Activated CD4-positive, alpha-beta memory T cell treated with anti-CD3 and anti-CD28 coated beads, Interleukin-2, amount 10 ng/mL, durations not matched to agents 7 days and 5 days (primary cell): ENCODE measurements at regions of chr11 and their contacts with region 1.

Region 1: GRCh38 chr11:58579192-58580129 is 598 bp downstream of the ZFP91 start:
- DNase-seq: peak; percentile 92
- H3K4me3 Mint-ChIP-seq: peak overlapping the region; percentile 94
- H3K27ac Mint-ChIP-seq: peak overlapping the region; percentile 100
- H3K4me1 Mint-ChIP-seq: peaks cover 57% of the 10 kb centered on the region
- H3K27me3 Mint-ChIP-seq: no peaks in the 10 kb centered on the region

Region 2: DNA sequence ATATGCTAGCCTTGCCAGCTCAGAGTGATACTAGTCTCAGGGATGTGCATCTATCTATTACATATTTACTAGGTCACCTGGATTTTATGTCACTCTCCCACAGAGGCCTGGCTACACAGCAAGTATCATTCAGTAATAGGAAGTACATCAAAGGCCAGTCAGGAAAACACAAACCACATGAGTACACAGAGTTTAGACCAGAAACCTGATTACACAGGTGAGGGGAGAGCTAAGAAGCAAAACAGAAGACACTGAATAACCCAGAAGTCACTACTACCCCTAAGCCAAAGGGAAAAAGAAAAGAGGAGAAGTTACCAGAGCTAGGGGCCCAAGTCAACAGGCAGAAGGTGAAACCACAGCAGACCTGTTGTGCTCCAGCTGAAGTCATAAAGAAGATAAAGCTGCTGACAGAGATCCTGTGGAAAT is 17.1 kb before region 1 on chr11:
- CTCF ChIA-PET with region 1: interaction called, 76 read pairs
- POLR2A ChIA-PET with region 1: interaction called, 36 read pairs
- DNase-seq: no peak
- H3K4me3 Mint-ChIP-seq: no peak overlapping the region
- H3K27ac Mint-ChIP-seq: peak overlapping the region; percentile 58
- H3K4me1 Mint-ChIP-seq: peaks cover 42% of the 10 kb centered on the region
- H3K27me3 Mint-ChIP-seq: no peaks in the 10 kb centered on the region

Region 3: DNA sequence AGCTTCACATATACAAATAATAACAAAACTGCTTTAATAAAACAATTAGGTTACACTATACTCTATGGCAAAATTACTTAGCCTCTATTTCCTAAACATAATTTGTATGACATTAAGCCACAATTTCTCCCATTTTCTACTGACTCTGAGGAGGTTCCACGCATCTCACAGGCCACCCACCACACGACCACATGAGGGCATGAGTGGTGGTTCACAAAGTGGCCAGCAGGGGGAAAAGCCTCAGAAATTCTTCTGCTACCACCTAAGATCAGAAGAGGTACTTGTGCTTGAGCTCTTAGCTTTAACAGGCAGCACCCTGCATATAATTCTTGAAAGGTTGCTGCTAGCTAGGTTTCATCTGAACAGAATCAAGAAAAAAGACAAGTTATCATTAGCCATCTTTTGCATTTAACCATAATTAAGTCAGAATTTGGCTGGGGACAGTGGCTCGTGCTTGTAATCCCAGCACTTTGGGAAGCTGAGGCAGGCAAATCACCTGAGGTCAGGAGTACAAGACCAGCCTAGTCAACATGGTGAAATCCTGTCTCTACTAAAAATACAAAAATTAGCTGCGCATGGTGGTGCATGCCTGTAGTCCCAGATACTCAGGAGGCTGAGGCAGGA is 11.5 kb before region 1 on chr11:
- CTCF ChIA-PET with region 1: interaction called, 76 read pairs
- POLR2A ChIA-PET with region 1: interaction called, 36 read pairs
- DNase-seq: peak; percentile 77
- H3K4me3 Mint-ChIP-seq: no peak overlapping the region
- H3K27ac Mint-ChIP-seq: peak overlapping the region; percentile 61
- H3K4me1 Mint-ChIP-seq: peaks cover 63% of the 10 kb centered on the region
- H3K27me3 Mint-ChIP-seq: no peaks in the 10 kb centered on the region

Region 4: DNA sequence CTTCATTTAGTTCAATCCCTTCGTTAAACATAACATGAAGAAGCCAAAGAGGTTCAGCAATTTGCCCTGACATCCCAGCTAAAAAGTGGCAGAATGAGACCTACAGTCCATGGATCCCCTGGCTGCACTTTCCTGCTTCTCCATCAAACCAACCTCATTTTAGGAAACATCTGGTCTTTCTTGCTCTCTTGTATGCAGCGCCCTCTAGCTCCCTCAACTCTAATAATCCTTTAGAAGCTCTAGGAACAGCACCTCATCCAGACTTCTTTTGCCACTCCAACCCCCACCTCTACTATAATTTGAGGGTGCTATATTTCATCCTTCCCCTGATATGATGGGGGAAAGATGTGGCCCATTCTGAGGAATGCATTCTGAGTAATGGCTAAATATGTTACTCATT is 50.4 kb after region 1 on chr11:
- CTCF ChIA-PET with region 1: interaction called, 11 read pairs
- POLR2A ChIA-PET with region 1: interaction called, 4 read pairs
- DNase-seq: no peak
- H3K4me3 Mint-ChIP-seq: no peak overlapping the region
- H3K27ac Mint-ChIP-seq: no peak overlapping the region
- H3K4me1 Mint-ChIP-seq: peaks cover 5% of the 10 kb centered on the region
- H3K27me3 Mint-ChIP-seq: no peaks in the 10 kb centered on the region

Region 5: GRCh38 chr11:58640386-58641023 is 61.0 kb after region 1 on chr11:
- CTCF ChIA-PET with region 1: no interaction called
- POLR2A ChIA-PET with region 1: no interaction called
- DNase-seq: no peak
- H3K4me3 Mint-ChIP-seq: no peak overlapping the region
- H3K27ac Mint-ChIP-seq: no peak overlapping the region
- H3K4me1 Mint-ChIP-seq: peaks cover 9% of the 10 kb centered on the region
- H3K27me3 Mint-ChIP-seq: peaks cover 2% of the 10 kb centered on the region

Region 6: DNA sequence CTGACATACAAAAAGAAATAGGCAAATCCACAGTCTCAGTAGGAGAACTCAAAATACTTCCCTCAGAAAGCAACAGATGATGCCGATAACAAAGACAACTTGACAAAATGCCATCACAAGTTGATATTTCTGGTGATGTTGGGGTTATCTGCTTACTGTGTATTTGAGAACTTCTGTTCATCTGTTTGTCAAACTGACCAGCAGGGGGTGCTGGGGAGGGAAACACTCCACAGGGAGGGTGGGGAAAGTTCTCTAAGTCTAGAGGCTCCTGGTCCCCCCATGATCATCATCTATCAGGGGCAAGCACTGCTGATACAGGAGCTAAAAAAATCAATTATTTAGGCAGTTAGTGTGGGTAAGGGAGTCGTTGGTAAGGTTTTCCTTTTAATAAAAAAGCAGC is 379.0 kb after region 1 on chr11:
- CTCF ChIA-PET with region 1: no interaction called
- POLR2A ChIA-PET with region 1: no interaction called
- DNase-seq: peak; percentile 31
- H3K4me3 Mint-ChIP-seq: no peak overlapping the region
- H3K27ac Mint-ChIP-seq: no peak overlapping the region
- H3K4me1 Mint-ChIP-seq: no peaks in the 10 kb centered on the region
- H3K27me3 Mint-ChIP-seq: peaks cover 10% of the 10 kb centered on the region

Region 7: DNA sequence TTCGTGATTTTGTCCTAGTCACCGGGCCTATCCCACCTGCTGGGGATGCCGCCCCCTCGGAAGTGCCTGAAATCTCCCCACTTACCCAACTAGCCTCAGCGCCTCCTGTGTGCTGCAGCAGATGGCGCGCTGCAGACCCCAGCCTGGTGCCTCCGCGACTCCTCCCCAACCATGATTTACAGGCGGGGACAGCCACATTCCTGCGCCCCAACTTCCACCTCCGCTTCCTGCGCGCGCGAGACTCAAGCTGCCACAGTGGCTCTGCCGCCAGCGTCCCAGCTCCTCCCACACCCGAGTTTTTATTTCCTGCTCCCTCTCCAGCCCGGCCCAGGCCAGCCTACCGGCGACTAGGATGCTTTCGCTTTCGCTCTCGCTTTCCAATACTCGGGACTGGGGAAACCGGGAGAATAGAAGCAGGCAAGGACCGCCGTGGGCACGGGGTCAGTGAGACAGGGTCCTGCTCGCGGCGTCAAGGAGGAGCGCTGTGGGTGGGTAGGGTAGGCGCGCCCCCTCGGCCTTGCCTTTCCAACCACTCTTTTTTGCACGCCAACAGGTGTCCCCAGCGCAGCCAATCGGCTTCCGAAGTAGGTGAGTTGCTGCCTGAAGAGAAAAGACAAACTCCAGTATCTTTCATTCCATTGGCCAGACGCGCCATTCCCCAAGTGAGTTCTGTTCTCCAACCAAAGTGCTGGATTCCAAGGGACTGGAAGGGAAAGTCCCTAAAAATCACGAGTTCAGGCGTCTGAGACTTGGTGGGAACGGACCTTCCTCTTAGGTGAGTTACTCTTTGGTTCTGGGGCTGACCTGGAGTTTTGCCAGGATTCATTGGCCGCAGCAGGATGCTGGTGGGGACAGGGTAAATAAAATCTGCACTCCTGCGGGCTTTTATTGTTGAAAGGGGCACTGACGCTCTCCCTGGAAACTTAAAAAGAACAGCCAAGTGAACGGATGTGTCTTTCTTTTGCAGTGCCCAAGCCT is 563.4 kb after region 1 on chr11 and contains the start of gene FAM111A:
- CTCF ChIA-PET with region 1: interaction called, 7 read pairs
- POLR2A ChIA-PET with region 1: interaction called, 15 read pairs
- DNase-seq: peak; percentile 91
- H3K4me3 Mint-ChIP-seq: peak within 1 kb of the TSS; percentile 95
- H3K27ac Mint-ChIP-seq: peak within 1 kb of the TSS; percentile 93
- H3K4me1 Mint-ChIP-seq: peaks cover 58% of the 10 kb centered on the region
- H3K27me3 Mint-ChIP-seq: no peaks in the 10 kb centered on the region
- total RNA-seq, gene FAM111A: 136 to 141 TPM